Naive thymus-derived CD8-positive, alpha-beta T cell (primary cell): ENCODE measurements at regions of chr3 and their contacts with region 1.

Region 1: DNA sequence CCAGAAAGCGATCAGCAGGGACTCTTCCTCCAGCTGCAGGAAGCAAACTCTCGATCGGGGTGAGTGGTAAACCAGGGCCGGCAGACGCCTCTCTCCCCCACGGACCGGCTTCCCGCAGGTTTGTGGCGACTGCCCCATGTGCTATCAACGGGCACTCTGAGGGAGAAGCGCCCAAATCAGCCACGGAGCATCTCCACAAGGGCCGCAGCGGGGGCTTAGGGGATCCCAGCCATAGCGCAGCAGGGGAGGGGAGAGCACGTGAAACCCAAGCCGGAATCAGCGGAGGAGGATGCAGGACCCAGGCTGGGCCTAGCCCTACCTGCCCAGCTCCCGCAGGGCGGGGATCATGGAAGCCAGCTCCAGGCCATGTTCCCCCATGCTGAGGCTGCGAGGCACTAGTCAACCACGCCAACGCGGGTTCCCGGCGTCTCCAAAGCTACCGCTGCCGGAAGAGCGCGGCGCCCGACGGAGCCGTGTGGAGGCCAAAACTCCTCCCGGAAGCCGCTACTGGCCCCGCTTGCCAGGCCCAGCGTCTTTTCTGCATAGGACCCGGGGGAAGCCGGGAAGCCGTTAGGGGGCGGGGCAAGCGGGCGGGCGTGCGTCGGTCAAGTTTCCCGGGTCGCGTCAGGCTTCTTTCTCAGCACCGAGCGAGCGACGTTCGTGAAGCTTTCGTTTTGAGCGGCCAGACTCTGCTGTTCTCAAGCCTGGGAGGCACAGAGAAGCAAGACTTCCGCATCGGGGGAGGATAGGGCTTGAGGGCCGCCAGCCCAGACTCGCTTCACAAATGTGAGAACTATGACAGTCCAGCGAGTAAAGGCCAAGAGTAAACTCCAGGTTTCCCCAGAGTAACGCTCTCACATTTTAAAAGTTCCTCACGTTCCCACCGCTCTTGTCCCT is at the start of gene ATR:
- DNase-seq: peak; percentile 86 to 97 (median 94)
- ATAC-seq: peak; percentile 89 to 91
- H3K4me3 Mint-ChIP-seq: peak within 1 kb of the TSS; percentile 93 to 99 (median 96)
- H3K27ac Mint-ChIP-seq: peak within 1 kb of the TSS; percentile 96 to 99 (median 98)
- H3K4me1 Mint-ChIP-seq: peaks cover 29 to 61% (median 52%) of the 10 kb centered on the region in 4 donors
- H3K27me3 Mint-ChIP-seq: peaks cover 0 to 4% (median 0%) of the 10 kb centered on the region in 5 donors
- polyA plus RNA-seq, gene ATR: 10.5 to 11.6 (median 11.5) TPM

Region 2: DNA sequence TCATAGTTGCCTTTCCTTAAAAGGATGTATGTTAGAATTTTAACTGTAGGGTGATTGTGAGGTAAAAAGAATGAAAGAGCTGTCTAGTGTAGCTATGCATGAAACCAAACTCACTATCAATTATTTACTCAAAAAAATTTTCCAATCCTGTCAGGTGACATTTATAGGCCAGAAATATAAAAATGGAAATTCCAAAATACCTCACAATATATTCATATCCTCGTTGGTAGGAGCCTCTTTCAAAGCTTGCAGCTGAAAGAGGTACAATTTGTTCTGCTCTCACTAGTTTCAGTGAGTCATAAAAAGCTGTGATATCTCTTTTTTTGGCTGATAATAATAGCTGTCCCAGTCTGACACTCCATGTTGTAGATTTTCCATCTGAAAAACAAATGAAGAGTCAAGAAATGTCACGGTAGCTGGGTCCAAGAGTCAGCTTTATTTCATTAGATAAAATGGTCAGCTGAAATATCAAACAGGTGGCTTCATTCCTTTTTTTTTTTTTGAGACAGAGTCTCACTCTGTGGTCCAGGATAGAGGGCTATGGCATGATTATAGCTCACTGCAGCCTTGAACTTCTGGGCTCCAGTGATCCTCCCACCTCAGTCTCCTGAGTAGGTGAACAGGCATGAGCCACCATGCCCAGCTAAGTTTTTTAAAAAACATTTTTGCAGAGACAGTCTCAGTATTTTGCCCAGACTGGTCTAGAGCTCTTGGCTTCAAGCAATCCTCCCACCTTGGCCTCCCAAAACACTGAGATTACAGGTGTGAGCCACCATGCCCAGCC is 80.0 kb before region 1 on chr3:
- POLR2A ChIA-PET with region 1: no interaction called
- DNase-seq: no peak
- ATAC-seq: no peak
- H3K4me3 Mint-ChIP-seq: no peak overlapping the region
- H3K27ac Mint-ChIP-seq: no peak overlapping the region
- H3K4me1 Mint-ChIP-seq: peaks cover 0 to 5% (median 1%) of the 10 kb centered on the region in 4 donors
- H3K27me3 Mint-ChIP-seq: no peaks in the 10 kb centered on the region

Region 3: DNA sequence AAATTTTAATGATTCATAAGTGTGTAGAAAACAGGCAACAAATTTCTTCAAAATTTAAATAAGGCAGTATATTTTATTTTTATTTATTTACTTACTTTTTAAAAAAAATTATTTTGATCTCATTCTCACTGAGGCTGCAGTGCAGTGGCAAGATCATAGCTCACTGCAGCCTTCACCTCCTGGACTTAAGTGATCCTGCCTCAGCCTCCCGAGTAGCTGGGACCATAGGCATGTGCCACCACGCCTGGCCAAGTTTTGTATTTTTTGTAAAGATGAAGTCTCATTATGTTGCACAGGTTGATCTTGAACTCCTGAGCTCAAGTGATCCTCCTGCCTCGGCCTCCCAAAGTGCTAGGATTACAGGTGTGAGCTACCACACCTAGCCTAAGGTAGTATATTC is 69.5 kb before region 1 on chr3:
- POLR2A ChIA-PET with region 1: interaction called, 14 read pairs
- DNase-seq: peak in 1 of 10 donors; percentile 0
- ATAC-seq: peak; percentile 37 to 65
- H3K4me3 Mint-ChIP-seq: peak overlapping the region; percentile 81 to 94 (median 86)
- H3K27ac Mint-ChIP-seq: peak overlapping the region; percentile 83 to 97 (median 94)
- H3K4me1 Mint-ChIP-seq: peaks cover 0 to 16% (median 7%) of the 10 kb centered on the region in 4 donors
- H3K27me3 Mint-ChIP-seq: no peaks in the 10 kb centered on the region

Region 4: GRCh38 chr3:142595951-142596725 is 17.6 kb after region 1 on chr3 and contains the start of gene PLS1:
- POLR2A ChIA-PET with region 1: interaction called, 33 read pairs
- DNase-seq: peak; percentile 68 to 93 (median 86)
- ATAC-seq: peak; percentile 86 to 87
- H3K4me3 Mint-ChIP-seq: peak within 1 kb of the TSS; percentile 93 to 99 (median 96)
- H3K27ac Mint-ChIP-seq: peak within 1 kb of the TSS; percentile 66 to 96 (median 92)
- H3K4me1 Mint-ChIP-seq: peaks cover 10 to 30% (median 16%) of the 10 kb centered on the region in 4 donors
- H3K27me3 Mint-ChIP-seq: peaks cover 0 to 2% (median 0%) of the 10 kb centered on the region in 5 donors
- polyA plus RNA-seq, gene PLS1: 3.6 to 6.1 (median 4.4) TPM

Region 5: DNA sequence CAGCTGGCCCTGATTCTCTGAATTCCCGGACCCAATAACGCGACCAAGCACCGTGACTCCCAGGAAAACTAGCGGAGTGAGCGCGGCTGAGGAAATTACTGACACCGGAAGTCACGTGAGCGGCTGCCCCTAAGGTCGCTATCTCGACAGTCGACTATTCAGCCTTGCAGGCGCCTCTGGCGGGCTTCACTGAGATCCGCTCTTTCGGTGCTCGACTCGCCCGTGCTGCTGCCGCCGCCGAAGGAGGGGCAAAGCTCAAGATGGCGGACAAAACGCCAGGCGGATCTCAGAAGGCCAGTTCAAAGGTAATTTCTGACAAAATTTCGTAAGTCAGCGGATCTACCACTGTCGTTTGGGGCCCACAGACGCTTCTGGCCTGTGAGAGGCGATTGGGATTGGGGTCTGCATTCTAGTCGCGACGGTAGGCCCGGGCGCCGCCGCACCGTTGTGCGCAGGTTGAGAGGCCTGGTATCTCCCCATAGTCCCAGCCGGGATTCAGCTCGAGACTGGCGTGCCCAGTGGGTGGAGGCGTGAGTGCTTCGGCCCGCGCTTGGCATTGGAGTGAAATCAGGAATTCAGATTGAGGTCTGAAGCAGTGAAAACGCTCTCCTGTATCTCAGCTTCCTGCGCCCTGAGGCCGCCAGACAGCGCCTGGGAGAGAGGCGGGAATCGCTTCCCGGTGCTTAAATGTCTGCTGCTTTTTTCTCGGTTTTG is 423.0 kb after region 1 on chr3 and contains the start of gene U2SURP:
- POLR2A ChIA-PET with region 1: interaction called, 44 read pairs
- DNase-seq: peak; percentile 81 to 95 (median 90)
- ATAC-seq: peak; percentile 92 to 94
- H3K4me3 Mint-ChIP-seq: peak within 1 kb of the TSS; percentile 94 to 100 (median 99)
- H3K27ac Mint-ChIP-seq: peak within 1 kb of the TSS; percentile 97 to 100 (median 100)
- H3K4me1 Mint-ChIP-seq: peaks cover 19 to 51% (median 40%) of the 10 kb centered on the region in 4 donors
- H3K27me3 Mint-ChIP-seq: peaks cover 0 to 2% (median 0%) of the 10 kb centered on the region in 5 donors
- polyA plus RNA-seq, gene U2SURP: 110 to 131 (median 125) TPM

Region 6: GRCh38 chr3:143972505-143973255 is 1394.1 kb after region 1 on chr3:
- POLR2A ChIA-PET with region 1: interaction called, 12 read pairs
- DNase-seq: peak; percentile 14 to 78 (median 50)
- ATAC-seq: peak; percentile 8 to 15
- H3K4me3 Mint-ChIP-seq: peak overlapping the region; percentile 89 to 99 (median 98)
- H3K27ac Mint-ChIP-seq: peak overlapping the region; percentile 92 to 98 (median 96)
- H3K4me1 Mint-ChIP-seq: peaks cover 15 to 52% (median 32%) of the 10 kb centered on the region in 4 donors
- H3K27me3 Mint-ChIP-seq: peaks cover 0 to 4% (median 0%) of the 10 kb centered on the region in 5 donors